ENCODE measurements at regions of chr1 and their contacts with region 1.

Region 1: GRCh38 chr1:62493656-62494055 is 56.8 kb downstream of the USP1 start:
- DNase-seq: no peak
- H3K4me3 ChIP-seq: no peak overlapping the region
- H3K27ac ChIP-seq: no peak overlapping the region
- H3K4me1 ChIP-seq: no peaks in the 10 kb centered on the region
- H3K27me3 ChIP-seq: no peaks in the 10 kb centered on the region
- CTCF ChIP-seq: no peak

Region 2: GRCh38 chr1:62424411-62424810 is 69.2 kb before region 1 on chr1:
- intact Hi-C with region 1: no loop called
- DNase-seq: no peak
- H3K4me3 ChIP-seq: no peak overlapping the region
- H3K27ac ChIP-seq: no peak overlapping the region
- H3K4me1 ChIP-seq: no peaks in the 10 kb centered on the region
- H3K27me3 ChIP-seq: no peaks in the 10 kb centered on the region
- CTCF ChIP-seq: no peak

Region 3: GRCh38 chr1:63350320-63350719 is 856.7 kb after region 1 on chr1:
- intact Hi-C with region 1: loop called (anchors 10 kb)
- DNase-seq: no peak
- H3K4me3 ChIP-seq: no peak overlapping the region
- H3K27ac ChIP-seq: no peak overlapping the region
- H3K4me1 ChIP-seq: no peaks in the 10 kb centered on the region
- H3K27me3 ChIP-seq: no peaks in the 10 kb centered on the region
- CTCF ChIP-seq: no peak

Measured in colonic mucosa (tissue), 4 donors.